Activated T-helper 1 cell treated with anti-CD3 and anti-CD28 coated beads, Interleukin-12 subunit alpha, Interleukin-12 subunit beta, Interleukin-2, Interleukin-4 antibody, amounts not matched to agents 30 ng/mL and 10 ng/mL and 1 ng/mL, durations not matched to agents 14 hours and 24 hours and 36 hours (primary cell): ENCODE measurements at regions of chr6 and their contacts with region 1.

Region 1: GRCh38 chr6:149696901-149697300 is 21.0 kb downstream of the LATS1 start:
- DNase-seq: no peak
- H3K4me3 Mint-ChIP-seq: no peak overlapping the region
- H3K27ac Mint-ChIP-seq: no peak overlapping the region
- H3K4me1 Mint-ChIP-seq: peaks cover 6% of the 10 kb centered on the region
- H3K27me3 Mint-ChIP-seq: no peaks in the 10 kb centered on the region

Region 2: DNA sequence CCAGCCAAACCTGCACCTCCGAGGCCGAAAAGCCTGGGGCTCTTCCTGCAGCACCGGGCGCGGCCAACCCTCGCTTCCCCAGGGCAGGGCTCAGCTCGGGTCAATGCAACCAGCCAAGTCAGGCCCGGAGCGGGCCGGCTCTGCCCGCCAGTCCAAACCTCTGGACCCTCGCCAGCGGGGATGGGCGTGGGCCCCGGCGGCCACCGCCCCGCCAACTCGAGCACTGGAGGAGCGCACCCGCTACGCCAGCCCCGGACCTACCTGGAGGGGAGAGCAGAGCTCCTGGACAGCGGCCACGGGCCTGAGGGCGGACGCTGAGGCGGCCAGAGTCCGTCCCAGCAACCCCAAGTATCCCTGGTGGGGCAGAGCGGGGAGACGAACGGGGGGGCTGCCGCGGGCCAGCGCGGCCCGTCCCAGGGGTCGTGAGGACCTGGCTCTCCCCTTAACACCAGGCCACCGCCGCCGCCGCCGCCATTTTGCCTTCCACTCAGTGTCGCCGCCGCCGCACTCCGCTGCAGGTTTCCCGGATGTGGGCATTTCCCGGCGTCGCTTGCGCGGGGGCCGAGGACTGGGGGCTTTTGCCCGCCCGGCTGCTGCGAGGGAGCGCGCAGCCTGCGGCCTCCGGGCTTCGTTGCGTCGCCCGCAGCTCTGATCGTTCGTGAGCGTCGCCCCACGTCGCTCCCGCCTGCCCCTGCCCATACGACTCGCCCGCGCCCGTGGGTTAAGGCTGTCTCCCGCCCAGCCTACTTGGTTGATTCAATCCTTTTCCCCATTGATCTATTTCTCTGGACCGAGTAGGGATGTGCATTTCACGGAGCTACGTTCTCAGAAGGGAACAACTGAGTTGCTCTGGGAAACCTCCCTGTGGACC is 20.9 kb after region 1 on chr6 and contains the start of gene LATS1:
- intact Hi-C with region 1: loop called (anchors 2 kb)
- DNase-seq: peak; percentile 90
- H3K4me3 Mint-ChIP-seq: peak within 1 kb of the TSS; percentile 93
- H3K27ac Mint-ChIP-seq: peak within 1 kb of the TSS; percentile 91
- H3K4me1 Mint-ChIP-seq: peaks cover 31% of the 10 kb centered on the region
- H3K27me3 Mint-ChIP-seq: no peaks in the 10 kb centered on the region
- total RNA-seq, gene LATS1: 33.1 and 34.0 TPM in 2 replicates

Region 3: DNA sequence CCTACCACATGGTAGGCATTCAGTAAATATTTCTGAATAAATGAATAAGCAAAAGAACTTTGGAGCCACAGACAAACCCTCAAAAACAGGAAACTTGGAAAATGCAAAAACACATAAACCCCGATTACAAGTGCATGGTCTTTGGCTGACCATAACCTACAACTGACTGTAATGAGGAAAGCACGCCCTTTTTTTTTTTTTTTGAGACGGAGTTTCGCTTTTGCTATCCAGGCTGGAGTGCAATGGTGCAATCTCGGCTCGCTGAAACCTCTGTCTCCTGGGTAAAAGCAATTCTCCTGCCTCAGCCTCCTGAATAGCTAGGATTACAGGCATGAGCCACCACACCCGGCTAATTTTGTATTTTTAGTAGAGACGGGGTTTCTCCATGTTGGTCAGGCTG is 32.9 kb after region 1 on chr6:
- intact Hi-C with region 1: loop called (anchors 1 kb)
- DNase-seq: no peak
- H3K4me3 Mint-ChIP-seq: no peak overlapping the region
- H3K27ac Mint-ChIP-seq: no peak overlapping the region
- H3K4me1 Mint-ChIP-seq: peaks cover 22% of the 10 kb centered on the region
- H3K27me3 Mint-ChIP-seq: no peaks in the 10 kb centered on the region

Region 4: GRCh38 chr6:150310539-150310938 is 613.6 kb after region 1 on chr6:
- intact Hi-C with region 1: no loop called
- DNase-seq: no peak
- H3K4me3 Mint-ChIP-seq: no peak overlapping the region
- H3K27ac Mint-ChIP-seq: no peak overlapping the region
- H3K4me1 Mint-ChIP-seq: peaks cover 4% of the 10 kb centered on the region
- H3K27me3 Mint-ChIP-seq: peaks cover 20% of the 10 kb centered on the region